ENCODE measurements at regions of chr4 and their contacts with region 1.

Region 1: GRCh38 chr4:16443504-16444088 is 217.3 kb upstream of the TAPT1 start:
- DNase-seq: no peak
- H3K4me3 Mint-ChIP-seq: no peak overlapping the region
- H3K27ac Mint-ChIP-seq: no peak overlapping the region
- H3K4me1 Mint-ChIP-seq: no peaks in the 10 kb centered on the region
- H3K27me3 Mint-ChIP-seq: no peaks in the 10 kb centered on the region

Region 2: DNA sequence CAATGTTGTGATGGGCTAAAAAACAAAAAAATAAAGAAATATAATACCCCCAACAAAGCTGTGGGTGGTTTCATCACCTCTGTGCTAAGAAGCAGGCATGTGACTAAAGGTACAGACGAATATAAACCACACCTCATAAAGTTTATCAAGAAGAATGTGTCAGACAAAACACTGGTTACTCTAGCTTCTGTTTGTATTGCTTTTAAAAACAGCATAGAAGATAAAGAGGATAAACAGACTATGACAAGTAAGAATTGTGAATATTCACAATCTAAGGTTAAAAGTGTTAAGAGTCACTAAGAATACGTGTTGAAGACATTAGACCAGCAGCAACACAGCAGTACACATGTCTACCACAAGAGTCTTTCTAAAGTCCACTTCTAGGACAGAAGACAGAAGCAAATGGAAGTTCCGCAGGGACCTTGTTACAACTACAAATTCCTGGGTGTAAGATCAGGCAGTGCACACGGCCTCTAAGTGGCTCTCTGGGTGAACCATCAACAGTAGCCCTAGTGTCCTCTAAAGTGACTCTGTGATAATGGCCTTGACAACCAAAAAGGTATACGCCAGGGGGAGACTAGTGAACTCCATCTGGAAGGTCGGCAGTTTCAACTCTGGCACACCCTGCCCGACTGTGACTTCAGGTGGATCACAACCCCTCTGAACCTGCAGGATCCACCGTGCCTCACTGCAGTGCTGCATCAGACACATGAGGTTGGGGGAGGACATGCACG is 472.4 kb before region 1 on chr4:
- intact Hi-C with region 1: no loop called
- DNase-seq: no peak
- H3K4me3 Mint-ChIP-seq: no peak overlapping the region
- H3K27ac Mint-ChIP-seq: no peak overlapping the region
- H3K4me1 Mint-ChIP-seq: no peaks in the 10 kb centered on the region
- H3K27me3 Mint-ChIP-seq: peaks cover 25% of the 10 kb centered on the region

Region 3: GRCh38 chr4:16026160-16026761 is 417.3 kb before region 1 on chr4:
- intact Hi-C with region 1: loop called (anchors 5 kb)
- DNase-seq: no peak
- H3K4me3 Mint-ChIP-seq: no peak overlapping the region
- H3K27ac Mint-ChIP-seq: no peak overlapping the region
- H3K4me1 Mint-ChIP-seq: peaks cover 16% of the 10 kb centered on the region
- H3K27me3 Mint-ChIP-seq: peaks cover 13% of the 10 kb centered on the region